KBM-7 (cell line): ENCODE measurements at regions of chr4 and their contacts with region 1.

Region 1: GRCh38 chr4:171857302-171858012 is 44.3 kb downstream of the GALNTL6 start:
- DNase-seq: no peak

Region 2: GRCh38 chr4:172740434-172740833 is 883.0 kb after region 1 on chr4:
- in situ Hi-C with region 1: no loop called
- DNase-seq: no peak

Region 3: DNA sequence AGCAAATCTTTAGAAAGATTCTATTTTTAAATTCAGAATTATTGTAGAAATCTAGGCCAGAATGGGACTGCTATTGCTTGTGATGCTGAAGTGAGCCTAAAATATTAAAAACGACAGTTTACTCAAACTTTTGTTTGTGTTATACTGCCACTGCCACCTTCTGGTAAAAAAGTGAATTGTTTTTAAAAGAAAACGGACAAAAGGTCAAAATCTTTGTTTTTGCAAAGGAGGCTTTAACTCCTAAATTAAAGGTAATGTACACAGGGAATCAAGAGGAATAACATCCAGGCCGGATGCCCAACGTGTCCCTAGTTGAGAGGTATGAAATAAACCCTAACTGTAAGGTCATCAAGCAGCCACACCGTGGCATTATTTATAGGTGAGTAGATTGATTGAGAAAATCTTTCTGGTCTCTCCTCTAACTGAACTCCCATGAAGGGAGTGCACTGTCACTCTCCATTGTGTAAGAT is 972.9 kb after region 1 on chr4:
- in situ Hi-C with region 1: loop called (anchors 25 kb)
- DNase-seq: peak; percentile 39